PC-9 (cell line): ENCODE measurements at regions of chr14 and their contacts with region 1.

Region 1: GRCh38 chr14:77721437-77721836 is 13.5 kb downstream of the SLIRP start:
- DNase-seq: no peak
- H3K4me3 ChIP-seq: no peak overlapping the region
- H3K27ac ChIP-seq: no peak overlapping the region
- H3K4me1 ChIP-seq: no peaks in the 10 kb centered on the region
- H3K27me3 ChIP-seq: no peaks in the 10 kb centered on the region
- CTCF ChIP-seq: no peak

Region 2: DNA sequence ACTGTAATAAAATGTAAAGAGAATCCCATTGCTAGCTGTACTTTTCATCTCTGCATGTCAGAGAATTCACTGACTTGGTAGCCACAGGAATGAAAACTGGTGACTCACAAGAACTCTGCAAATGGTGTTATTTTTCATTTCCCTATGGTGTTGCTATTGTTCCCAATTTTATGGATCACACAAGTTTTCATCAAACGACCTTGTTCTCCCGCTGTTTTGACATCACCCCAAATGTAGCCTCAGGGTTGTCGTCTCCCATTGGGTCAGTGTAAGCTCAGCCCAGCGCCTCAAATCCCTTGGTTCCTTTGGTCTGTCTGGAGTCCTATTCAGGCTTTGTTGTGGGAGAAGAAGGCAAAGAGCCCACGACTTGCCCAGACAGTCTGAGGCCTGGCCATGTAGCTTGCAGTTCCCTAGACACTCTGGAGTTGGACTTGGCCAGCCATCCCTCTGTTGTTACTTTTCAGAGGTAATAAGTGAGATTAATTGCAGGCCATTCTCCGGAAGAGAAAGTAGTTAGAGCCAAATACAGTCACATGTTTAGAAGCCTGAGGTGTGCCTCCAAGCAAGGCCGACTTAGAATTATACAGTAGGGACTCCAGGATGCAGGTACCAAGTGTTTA is 1898.8 kb before region 1 on chr14:
- CTCF ChIA-PET with region 1: no interaction called
- POLR2A ChIA-PET with region 1: interaction called, 18 read pairs
- intact Hi-C with region 1: no loop called
- DNase-seq: peak; percentile 47 to 92
- H3K4me3 ChIP-seq: no peak overlapping the region
- H3K27ac ChIP-seq: peak overlapping the region; percentile 65
- H3K4me1 ChIP-seq: peaks cover 26% of the 10 kb centered on the region
- H3K27me3 ChIP-seq: no peaks in the 10 kb centered on the region
- CTCF ChIP-seq: no peak

Region 3: DNA sequence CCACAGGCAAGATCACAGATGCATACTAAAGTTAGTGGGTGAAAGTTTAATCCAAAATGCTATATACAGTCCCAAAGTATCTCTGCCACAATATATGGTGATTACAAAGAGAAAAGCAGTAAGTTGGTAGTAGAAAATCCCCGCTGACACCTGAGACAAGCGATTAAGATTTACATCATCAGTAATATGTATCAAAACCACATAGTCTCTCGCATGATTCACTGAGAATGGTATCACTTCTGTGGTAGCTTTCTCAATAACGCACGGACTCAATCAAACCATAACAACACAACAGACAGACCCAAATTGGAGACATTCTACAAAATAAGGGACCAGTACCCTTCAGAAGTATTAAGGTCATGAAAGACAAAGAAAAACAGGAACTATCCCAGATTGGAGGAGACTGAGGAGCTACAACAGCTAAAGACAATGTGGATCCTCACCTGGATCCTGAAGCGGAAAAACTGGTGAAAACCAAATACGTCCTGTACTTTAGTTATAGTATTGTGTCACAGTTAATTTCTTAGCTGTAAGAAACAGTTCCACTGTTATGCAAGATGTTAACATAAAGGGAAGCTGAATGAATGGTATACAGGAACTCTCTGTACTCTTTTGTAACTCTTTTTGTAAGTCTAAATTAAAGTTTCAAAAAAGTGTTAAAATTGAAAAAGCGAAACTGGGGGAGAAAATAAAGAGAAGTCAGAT is 156.0 kb before region 1 on chr14:
- CTCF ChIA-PET with region 1: interaction called, 17 read pairs
- POLR2A ChIA-PET with region 1: no interaction called
- intact Hi-C with region 1: no loop called
- DNase-seq: no peak
- H3K4me3 ChIP-seq: no peak overlapping the region
- H3K27ac ChIP-seq: 0 out of 2 replicates have a peak overlapping the region, but pooled peaks have one; percentile 7
- H3K4me1 ChIP-seq: no peaks in the 10 kb centered on the region
- H3K27me3 ChIP-seq: no peaks in the 10 kb centered on the region
- CTCF ChIP-seq: no peak